ENCODE measurements at regions of chr2 and their contacts with region 1.

Region 1: GRCh38 chr2:113756355-113757137 is at the start of gene SLC35F5:
- DNase-seq: peak; percentile 87 to 97 (median 91)
- H3K4me3 ChIP-seq: peak within 1 kb of the TSS; percentile 95 to 100
- H3K4me3 Mint-ChIP-seq: peak within 1 kb of the TSS; percentile 92 to 99 (median 96)
- H3K27ac ChIP-seq: peak within 1 kb of the TSS; percentile 80
- H3K27ac Mint-ChIP-seq: peak within 1 kb of the TSS; percentile 96 to 100 (median 98)
- H3K4me1 ChIP-seq: peaks cover 25% of the 10 kb centered on the region
- H3K4me1 Mint-ChIP-seq: peaks cover 17 to 33% (median 25%) of the 10 kb centered on the region in 4 donors
- H3K27me3 ChIP-seq: no peaks in the 10 kb centered on the region
- H3K27me3 Mint-ChIP-seq: no peaks in the 10 kb centered on the region
- total RNA-seq, gene SLC35F5: 29.9 to 30.9 TPM

Region 2: GRCh38 chr2:113876503-113877387 is 120.2 kb after region 1 on chr2:
- CTCF ChIA-PET with region 1: no interaction called
- POLR2A ChIA-PET with region 1: interaction called, 14 read pairs
- intact Hi-C with region 1: no loop called
- DNase-seq: peak; percentile 72 to 86 (median 81)
- H3K4me3 ChIP-seq: no peak overlapping the region
- H3K4me3 Mint-ChIP-seq: peak overlapping the region; percentile 51 to 82 (median 74)
- H3K27ac ChIP-seq: peak overlapping the region; percentile 51
- H3K27ac Mint-ChIP-seq: peak overlapping the region; percentile 84 to 97 (median 91)
- H3K4me1 ChIP-seq: peaks cover 32% of the 10 kb centered on the region
- H3K4me1 Mint-ChIP-seq: peaks cover 28 to 47% (median 38%) of the 10 kb centered on the region in 4 donors
- H3K27me3 ChIP-seq: no peaks in the 10 kb centered on the region
- H3K27me3 Mint-ChIP-seq: no peaks in the 10 kb centered on the region

Region 3: GRCh38 chr2:113899166-113899565 is 142.6 kb after region 1 on chr2:
- CTCF ChIA-PET with region 1: interaction called, 4 read pairs
- POLR2A ChIA-PET with region 1: interaction called, 18 read pairs
- intact Hi-C with region 1: no loop called
- DNase-seq: no peak
- H3K4me3 ChIP-seq: no peak overlapping the region
- H3K4me3 Mint-ChIP-seq: peak overlapping the region in 7 of 8 donors; percentile 9 to 72 (median 61)
- H3K27ac ChIP-seq: no peak overlapping the region
- H3K27ac Mint-ChIP-seq: peak overlapping the region in 5 of 7 donors; percentile 2 to 57 (median 13)
- H3K4me1 ChIP-seq: peaks cover 100% of the 10 kb centered on the region
- H3K4me1 Mint-ChIP-seq: peaks cover 82 to 96% (median 89%) of the 10 kb centered on the region in 4 donors
- H3K27me3 ChIP-seq: no peaks in the 10 kb centered on the region
- H3K27me3 Mint-ChIP-seq: no peaks in the 10 kb centered on the region

Region 4: GRCh38 chr2:113965644-113966043 is 209.1 kb after region 1 on chr2:
- CTCF ChIA-PET with region 1: no interaction called
- POLR2A ChIA-PET with region 1: interaction called, 5 read pairs
- intact Hi-C with region 1: loop called (anchors 5 kb)
- DNase-seq: peak in 4 of 5 donors; percentile 13 to 27 (median 20)
- H3K4me3 ChIP-seq: no peak overlapping the region
- H3K4me3 Mint-ChIP-seq: no peak overlapping the region
- H3K27ac ChIP-seq: no peak overlapping the region
- H3K27ac Mint-ChIP-seq: peak overlapping the region in 6 of 7 donors; percentile 7 to 56 (median 30)
- H3K4me1 ChIP-seq: no peaks in the 10 kb centered on the region
- H3K4me1 Mint-ChIP-seq: peaks cover 0 to 9% (median 6%) of the 10 kb centered on the region in 4 donors
- H3K27me3 ChIP-seq: no peaks in the 10 kb centered on the region
- H3K27me3 Mint-ChIP-seq: no peaks in the 10 kb centered on the region